CD4-positive, alpha-beta memory T cell (primary cell): ENCODE measurements at regions of chr9 and their contacts with region 1.

Region 1: DNA sequence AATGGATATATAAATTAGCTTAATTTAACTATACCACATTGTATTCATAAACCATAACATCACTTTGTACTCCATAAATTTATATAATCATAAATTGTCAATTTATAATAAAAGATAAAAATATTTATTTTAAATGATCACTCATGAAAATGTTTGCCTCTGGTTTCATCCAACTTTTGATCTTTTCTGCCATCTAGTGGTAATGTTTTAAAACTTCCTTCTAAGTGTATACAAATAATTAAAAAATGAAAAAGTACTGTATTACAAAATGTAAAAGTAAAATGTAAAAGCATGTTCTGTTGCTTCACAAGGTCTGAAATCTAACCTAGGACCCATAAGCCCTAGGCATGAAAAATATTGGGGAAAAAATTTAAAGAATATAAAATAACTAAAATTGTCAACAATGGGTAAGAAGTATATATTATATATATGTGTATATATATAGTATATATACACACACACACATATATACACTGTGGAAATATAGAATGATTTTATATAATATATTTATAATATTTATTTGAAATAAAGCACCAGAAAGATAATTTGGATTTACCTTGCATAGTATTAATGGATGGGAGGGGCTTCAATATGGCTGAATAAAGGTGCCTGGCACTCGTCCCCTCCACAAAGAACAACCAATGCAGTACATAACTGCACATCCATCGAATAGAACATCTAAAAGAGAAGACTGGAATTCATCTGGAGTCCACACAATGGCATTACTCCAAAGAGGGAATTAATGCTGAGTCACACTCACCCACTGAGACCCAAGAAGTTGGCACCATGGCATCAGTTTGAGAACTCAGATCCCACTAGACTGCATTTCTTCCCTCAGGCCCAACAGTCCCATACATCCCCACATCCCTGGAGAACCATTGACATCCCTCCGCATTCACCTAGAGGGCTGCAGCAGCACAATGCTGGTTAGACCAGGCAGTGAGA is 32.5 kb downstream of the ANXA1 start:
- DNase-seq: peak in 4 of 5 donors; percentile 54 to 65 (median 60)
- H3K4me3 ChIP-seq: no peak overlapping the region
- H3K4me3 Mint-ChIP-seq: no peak overlapping the region
- H3K27ac ChIP-seq: no peak overlapping the region
- H3K27ac Mint-ChIP-seq: no peak overlapping the region
- H3K4me1 ChIP-seq: no peaks in the 10 kb centered on the region
- H3K4me1 Mint-ChIP-seq: peaks cover 0 to 4% (median under 1%) of the 10 kb centered on the region in 4 donors
- H3K27me3 ChIP-seq: no peaks in the 10 kb centered on the region
- H3K27me3 Mint-ChIP-seq: peaks cover 9 to 12% of the 10 kb centered on the region in 2 donors

Region 2: GRCh38 chr9:72280913-72281500 is 903.2 kb before region 1 on chr9:
- CTCF ChIA-PET with region 1: interaction called, 4 read pairs
- POLR2A ChIA-PET with region 1: no interaction called
- intact Hi-C with region 1: loop called (anchors 10 kb)
- DNase-seq: peak; percentile 61 to 66 (median 64)
- H3K4me3 ChIP-seq: no peak overlapping the region
- H3K4me3 Mint-ChIP-seq: no peak overlapping the region
- H3K27ac ChIP-seq: no peak overlapping the region
- H3K27ac Mint-ChIP-seq: no peak overlapping the region
- H3K4me1 ChIP-seq: no peaks in the 10 kb centered on the region
- H3K4me1 Mint-ChIP-seq: no peaks in the 10 kb centered on the region
- H3K27me3 ChIP-seq: no peaks in the 10 kb centered on the region
- H3K27me3 Mint-ChIP-seq: peaks cover 0 to 1% of the 10 kb centered on the region in 2 donors

Region 3: GRCh38 chr9:73023025-73023541 is 161.1 kb before region 1 on chr9:
- CTCF ChIA-PET with region 1: no interaction called
- POLR2A ChIA-PET with region 1: no interaction called
- intact Hi-C with region 1: loop called (anchors 2 kb)
- DNase-seq: peak; percentile 32 to 49 (median 35)
- H3K4me3 ChIP-seq: no peak overlapping the region
- H3K4me3 Mint-ChIP-seq: peak overlapping the region in 1 of 8 donors; percentile 12
- H3K27ac ChIP-seq: no peak overlapping the region
- H3K27ac Mint-ChIP-seq: no peak overlapping the region
- H3K4me1 ChIP-seq: peaks cover 4% of the 10 kb centered on the region
- H3K4me1 Mint-ChIP-seq: peaks cover 0 to 10% (median 6%) of the 10 kb centered on the region in 4 donors
- H3K27me3 ChIP-seq: no peaks in the 10 kb centered on the region
- H3K27me3 Mint-ChIP-seq: peaks cover 6 to 11% of the 10 kb centered on the region in 2 donors

Region 4: GRCh38 chr9:73104342-73104741 is 79.8 kb before region 1 on chr9:
- CTCF ChIA-PET with region 1: interaction called, 252 read pairs
- POLR2A ChIA-PET with region 1: interaction called, 4 read pairs
- intact Hi-C with region 1: loop called (anchors 1 kb)
- DNase-seq: no peak
- H3K4me3 ChIP-seq: no peak overlapping the region
- H3K4me3 Mint-ChIP-seq: no peak overlapping the region
- H3K27ac ChIP-seq: no peak overlapping the region
- H3K27ac Mint-ChIP-seq: no peak overlapping the region
- H3K4me1 ChIP-seq: no peaks in the 10 kb centered on the region
- H3K4me1 Mint-ChIP-seq: peaks cover 0 to 3% (median 1%) of the 10 kb centered on the region in 4 donors
- H3K27me3 ChIP-seq: no peaks in the 10 kb centered on the region
- H3K27me3 Mint-ChIP-seq: peaks cover 2 to 8% of the 10 kb centered on the region in 2 donors

Region 5: DNA sequence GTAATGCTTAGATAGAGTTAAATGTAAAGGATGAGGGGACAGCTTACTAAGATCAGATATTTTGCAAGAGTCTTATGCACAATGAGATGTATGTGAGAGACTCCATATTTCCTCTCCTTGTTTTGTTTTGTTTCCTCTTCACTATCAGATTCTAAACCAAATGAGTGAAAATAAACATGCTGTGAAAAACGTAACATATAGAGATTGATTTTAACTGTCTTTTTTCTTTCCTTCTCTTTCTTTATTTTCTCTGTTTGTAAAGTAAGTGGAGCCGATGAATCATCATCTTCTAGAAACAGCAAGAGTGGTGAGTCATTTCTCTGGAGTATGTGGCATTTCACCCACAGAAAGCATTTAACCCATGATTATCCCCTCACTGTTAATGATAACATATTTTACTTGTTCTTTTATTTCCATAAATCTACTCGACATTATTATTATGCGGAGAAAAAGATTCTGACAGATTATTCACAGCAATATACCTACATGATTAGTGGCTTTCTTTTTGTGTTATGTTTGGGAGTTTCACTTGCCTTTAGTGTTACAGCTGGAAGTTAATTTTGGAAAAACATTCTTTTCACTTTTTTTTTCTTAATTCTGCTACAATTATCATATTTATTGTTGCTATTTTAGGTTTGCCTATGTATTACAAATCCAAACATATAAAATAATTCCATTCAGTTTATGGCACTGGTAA is 34.7 kb before region 1 on chr9:
- CTCF ChIA-PET with region 1: interaction called, 9 read pairs
- POLR2A ChIA-PET with region 1: interaction called, 3 read pairs
- intact Hi-C with region 1: loop called (anchors 2 kb)
- DNase-seq: peak in 4 of 5 donors; percentile 33 to 68 (median 50)
- H3K4me3 ChIP-seq: peak overlapping the region in 1 of 2 donors; percentile 17
- H3K4me3 Mint-ChIP-seq: peak overlapping the region; percentile 37 to 83 (median 78)
- H3K27ac ChIP-seq: peak overlapping the region; percentile 75
- H3K27ac Mint-ChIP-seq: peak overlapping the region; percentile 82 to 99 (median 95)
- H3K4me1 ChIP-seq: peaks cover 41% of the 10 kb centered on the region
- H3K4me1 Mint-ChIP-seq: peaks cover 24 to 51% (median 32%) of the 10 kb centered on the region in 4 donors
- H3K27me3 ChIP-seq: no peaks in the 10 kb centered on the region
- H3K27me3 Mint-ChIP-seq: no peaks in the 10 kb centered on the region